PC-3 (cell line): ENCODE measurements at regions of chr1 and their contacts with region 1.

Region 1: DNA sequence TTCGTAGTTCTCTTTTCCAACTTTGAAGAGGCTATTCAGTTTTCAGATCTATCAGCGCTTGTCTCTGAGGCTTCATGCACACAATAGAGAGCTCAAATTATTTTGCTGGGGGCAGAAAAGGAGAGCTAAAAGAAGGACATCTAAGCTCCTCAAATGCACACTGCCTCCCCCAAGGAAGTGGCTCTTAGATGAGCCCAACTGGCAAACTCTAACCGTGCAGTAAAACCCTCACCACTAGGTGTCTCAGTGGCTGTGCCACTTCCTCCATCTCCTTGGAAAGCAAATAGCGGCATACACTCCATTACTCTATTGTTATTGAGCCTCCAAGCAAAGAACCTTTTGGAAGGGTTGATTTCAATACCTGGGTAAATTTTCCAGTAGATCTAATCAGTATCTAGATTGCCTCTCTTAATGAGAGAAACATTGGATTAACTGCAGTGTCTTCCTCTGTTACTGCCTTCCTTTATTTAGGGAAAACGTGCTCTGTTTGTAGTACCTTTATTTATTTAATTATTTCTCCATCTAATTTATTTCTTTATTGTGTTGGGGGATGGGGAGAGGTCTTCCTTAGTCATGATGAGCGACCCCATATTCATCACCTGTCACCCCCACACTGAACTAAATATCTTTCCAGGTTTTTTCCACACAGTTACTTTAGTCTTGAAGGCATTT is 9.2 kb upstream of the SFPQ start:
- DNase-seq: peak; percentile 86
- ATAC-seq: peak; percentile 99
- H3K4me3 ChIP-seq: no peak overlapping the region
- H3K27ac ChIP-seq: no peak overlapping the region
- H3K4me1 ChIP-seq: no peaks in the 10 kb centered on the region
- H3K27me3 ChIP-seq: no peaks in the 10 kb centered on the region
- CTCF ChIP-seq: peak; percentile 91

Region 2: GRCh38 chr1:34796990-34797389 is 405.2 kb before region 1 on chr1:
- CTCF ChIA-PET with region 1: no interaction called
- POLR2A ChIA-PET with region 1: no interaction called
- intact Hi-C with region 1: no loop called
- DNase-seq: no peak
- ATAC-seq: no peak
- H3K4me3 ChIP-seq: no peak overlapping the region
- H3K27ac ChIP-seq: no peak overlapping the region
- H3K4me1 ChIP-seq: no peaks in the 10 kb centered on the region
- H3K27me3 ChIP-seq: no peaks in the 10 kb centered on the region
- CTCF ChIP-seq: no peak

Region 3: DNA sequence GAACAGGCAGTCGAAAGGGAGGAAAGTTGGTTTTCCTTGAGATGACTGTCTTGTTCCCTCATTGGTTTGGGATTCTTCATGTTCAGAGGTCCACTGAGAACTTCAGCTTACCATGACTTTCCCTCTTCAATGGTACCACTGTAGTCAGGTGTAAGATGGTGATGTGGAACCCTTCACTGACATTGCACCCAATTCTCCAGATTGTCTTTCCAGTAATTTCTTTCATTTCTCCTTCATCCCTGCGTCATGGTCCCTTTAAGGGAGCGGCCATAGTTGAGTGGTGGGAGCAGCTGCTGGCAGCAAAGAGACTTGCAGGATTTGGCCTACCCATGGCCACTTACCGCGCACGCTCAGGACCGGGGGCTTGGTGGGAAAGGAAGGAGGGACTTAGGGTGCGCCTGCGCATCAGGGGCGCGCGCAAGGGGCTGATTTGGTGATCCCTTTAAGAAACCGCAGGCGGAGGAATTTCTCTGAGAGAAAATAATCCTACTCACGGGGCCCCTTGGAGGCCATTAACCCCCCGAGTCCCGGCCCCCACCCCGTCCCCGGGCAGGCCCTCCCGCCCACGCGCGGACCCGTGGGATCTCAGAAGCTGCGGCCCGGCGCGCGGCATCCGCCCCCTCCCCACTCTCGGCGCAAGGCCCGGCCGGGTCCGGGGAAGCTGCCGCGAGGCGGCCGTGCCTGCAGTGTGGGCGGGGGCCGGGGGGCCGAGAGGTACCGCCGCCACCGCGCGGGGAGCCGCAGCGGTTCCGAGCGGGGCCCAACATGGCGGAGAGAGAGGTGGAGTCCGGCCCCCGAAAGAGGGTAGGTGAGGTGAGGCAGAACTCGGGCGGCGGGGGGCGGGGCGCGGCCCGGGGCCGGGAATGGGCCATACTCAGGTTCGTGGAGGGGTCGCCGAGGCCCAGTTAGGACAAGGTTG is 66.4 kb after region 1 on chr1 and contains the start of gene ZMYM4:
- CTCF ChIA-PET with region 1: no interaction called
- POLR2A ChIA-PET with region 1: no interaction called
- intact Hi-C with region 1: loop called (anchors 2 kb)
- DNase-seq: peak; percentile 95
- ATAC-seq: peak; percentile 89
- H3K4me3 ChIP-seq: peak within 1 kb of the TSS; percentile 76
- H3K27ac ChIP-seq: peak within 1 kb of the TSS; percentile 51
- H3K4me1 ChIP-seq: peaks cover 31% of the 10 kb centered on the region
- H3K27me3 ChIP-seq: no peaks in the 10 kb centered on the region
- CTCF ChIP-seq: no peak
- total RNA-seq, gene ZMYM4: 28.5 and 31.0 TPM in 2 replicates

Region 4: GRCh38 chr1:35287807-35288640 is 85.8 kb after region 1 on chr1:
- CTCF ChIA-PET with region 1: no interaction called
- POLR2A ChIA-PET with region 1: no interaction called
- intact Hi-C with region 1: loop called (anchors 1 kb)
- DNase-seq: peak; percentile 31
- ATAC-seq: peak; percentile 87
- H3K4me3 ChIP-seq: no peak overlapping the region
- H3K27ac ChIP-seq: peak overlapping the region; percentile 28
- H3K4me1 ChIP-seq: peaks cover 18% of the 10 kb centered on the region
- H3K27me3 ChIP-seq: no peaks in the 10 kb centered on the region
- CTCF ChIP-seq: no peak

Region 5: DNA sequence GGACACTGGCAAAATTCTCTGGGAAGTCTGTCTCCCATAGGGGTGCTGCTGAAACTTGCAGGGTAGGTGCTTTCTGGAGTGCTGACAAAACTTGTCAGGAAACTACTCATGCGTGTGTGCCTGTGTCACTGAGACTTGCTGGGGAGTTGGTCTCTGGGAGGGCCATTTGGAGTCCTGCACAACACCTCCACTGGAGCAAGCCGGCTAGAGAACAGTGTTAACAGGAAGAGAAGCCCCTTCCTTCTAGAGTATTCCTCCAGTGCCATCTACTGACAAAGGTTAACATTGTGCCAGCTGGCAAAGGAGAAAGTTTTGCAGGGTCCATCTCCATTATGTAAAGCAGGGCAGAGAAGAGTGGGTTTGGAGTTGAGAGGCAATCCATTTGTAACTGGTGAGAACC is 96.3 kb after region 1 on chr1:
- CTCF ChIA-PET with region 1: no interaction called
- POLR2A ChIA-PET with region 1: no interaction called
- intact Hi-C with region 1: loop called (anchors 1 kb)
- DNase-seq: peak; percentile 37
- ATAC-seq: peak; percentile 64
- H3K4me3 ChIP-seq: no peak overlapping the region
- H3K27ac ChIP-seq: no peak overlapping the region
- H3K4me1 ChIP-seq: no peaks in the 10 kb centered on the region
- H3K27me3 ChIP-seq: no peaks in the 10 kb centered on the region
- CTCF ChIP-seq: peak; percentile 63

Region 6: GRCh38 chr1:35369922-35370671 is 167.9 kb after region 1 on chr1:
- CTCF ChIA-PET with region 1: no interaction called
- POLR2A ChIA-PET with region 1: no interaction called
- intact Hi-C with region 1: loop called (anchors 10 kb)
- DNase-seq: no peak
- ATAC-seq: no peak
- H3K4me3 ChIP-seq: no peak overlapping the region
- H3K27ac ChIP-seq: no peak overlapping the region
- H3K4me1 ChIP-seq: no peaks in the 10 kb centered on the region
- H3K27me3 ChIP-seq: no peaks in the 10 kb centered on the region
- CTCF ChIP-seq: no peak

Region 7: GRCh38 chr1:35406103-35406502 is 203.9 kb after region 1 on chr1:
- CTCF ChIA-PET with region 1: no interaction called
- POLR2A ChIA-PET with region 1: no interaction called
- intact Hi-C with region 1: loop called (anchors 10 kb)
- DNase-seq: peak; percentile 63
- ATAC-seq: peak; percentile 99
- H3K4me3 ChIP-seq: no peak overlapping the region
- H3K27ac ChIP-seq: no peak overlapping the region
- H3K4me1 ChIP-seq: 0 out of 2 replicates have a peak, but pooled peaks cover 11% of the 10 kb centered on the region
- H3K27me3 ChIP-seq: no peaks in the 10 kb centered on the region
- CTCF ChIP-seq: no peak